Colonic mucosa (tissue), 4 donors: ENCODE measurements at regions of chr1 and their contacts with region 1.

Region 1: GRCh38 chr1:162056043-162056442 is 13.4 kb upstream of the NOS1AP start:
- DNase-seq: peak; percentile 69
- H3K4me3 ChIP-seq: no peak overlapping the region
- H3K27ac ChIP-seq: no peak overlapping the region
- H3K4me1 ChIP-seq: no peaks in the 10 kb centered on the region
- H3K27me3 ChIP-seq: no peaks in the 10 kb centered on the region
- CTCF ChIP-seq: peak; percentile 75

Region 2: DNA sequence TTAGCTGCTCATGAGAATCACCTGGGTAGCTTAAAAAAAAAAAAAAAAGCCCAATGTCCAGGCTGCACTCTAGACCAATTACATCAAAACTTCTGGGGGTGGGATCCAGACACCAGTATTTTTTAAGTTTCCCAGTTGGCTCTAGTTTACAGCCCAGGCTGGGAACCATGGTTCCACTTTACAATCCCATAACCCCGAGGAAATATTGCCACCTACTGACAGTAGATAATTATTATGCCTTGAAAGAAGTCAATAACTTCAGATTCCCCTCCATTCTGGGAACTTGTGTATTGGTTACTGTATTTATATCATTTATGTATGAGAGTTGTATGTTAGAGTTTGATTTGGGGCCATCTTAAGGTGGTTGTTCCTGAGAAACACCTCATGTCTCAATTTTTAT is 220.4 kb after region 1 on chr1:
- intact Hi-C with region 1: loop called (anchors 2 kb)
- DNase-seq: no peak
- H3K4me3 ChIP-seq: no peak overlapping the region
- H3K27ac ChIP-seq: no peak overlapping the region
- H3K4me1 ChIP-seq: no peaks in the 10 kb centered on the region
- H3K27me3 ChIP-seq: no peaks in the 10 kb centered on the region
- CTCF ChIP-seq: peak; percentile 23

Region 3: GRCh38 chr1:162335126-162335525 is 279.1 kb after region 1 on chr1:
- intact Hi-C with region 1: no loop called
- DNase-seq: no peak
- H3K4me3 ChIP-seq: no peak overlapping the region
- H3K27ac ChIP-seq: no peak overlapping the region
- H3K4me1 ChIP-seq: no peaks in the 10 kb centered on the region
- H3K27me3 ChIP-seq: no peaks in the 10 kb centered on the region
- CTCF ChIP-seq: no peak